Activated B cell treated with CpG ODN at 0.5 μM for 24 hours (primary cell): ENCODE measurements at regions of chr1 and their contacts with region 1.

Region 1: GRCh38 chr1:183674339-183674738 is 21.2 kb upstream of the APOBEC4 start:
- DNase-seq: no peak
- ATAC-seq: no peak
- H3K4me3 Mint-ChIP-seq: no peak overlapping the region
- H3K27ac Mint-ChIP-seq: no peak overlapping the region
- H3K4me1 Mint-ChIP-seq: no peaks in the 10 kb centered on the region
- H3K27me3 Mint-ChIP-seq: peaks cover 25% of the 10 kb centered on the region
- CTCF ChIP-seq: no peak

Region 2: GRCh38 chr1:183416850-183417771 is 257.2 kb before region 1 on chr1:
- CTCF ChIA-PET with region 1: no interaction called
- POLR2A ChIA-PET with region 1: no interaction called
- intact Hi-C with region 1: no loop called
- DNase-seq: no peak
- ATAC-seq: no peak
- H3K4me3 Mint-ChIP-seq: peak overlapping the region; percentile 44
- H3K27ac Mint-ChIP-seq: no peak overlapping the region
- H3K4me1 Mint-ChIP-seq: peaks cover 27% of the 10 kb centered on the region
- H3K27me3 Mint-ChIP-seq: peaks cover 49% of the 10 kb centered on the region
- CTCF ChIP-seq: no peak

Region 3: DNA sequence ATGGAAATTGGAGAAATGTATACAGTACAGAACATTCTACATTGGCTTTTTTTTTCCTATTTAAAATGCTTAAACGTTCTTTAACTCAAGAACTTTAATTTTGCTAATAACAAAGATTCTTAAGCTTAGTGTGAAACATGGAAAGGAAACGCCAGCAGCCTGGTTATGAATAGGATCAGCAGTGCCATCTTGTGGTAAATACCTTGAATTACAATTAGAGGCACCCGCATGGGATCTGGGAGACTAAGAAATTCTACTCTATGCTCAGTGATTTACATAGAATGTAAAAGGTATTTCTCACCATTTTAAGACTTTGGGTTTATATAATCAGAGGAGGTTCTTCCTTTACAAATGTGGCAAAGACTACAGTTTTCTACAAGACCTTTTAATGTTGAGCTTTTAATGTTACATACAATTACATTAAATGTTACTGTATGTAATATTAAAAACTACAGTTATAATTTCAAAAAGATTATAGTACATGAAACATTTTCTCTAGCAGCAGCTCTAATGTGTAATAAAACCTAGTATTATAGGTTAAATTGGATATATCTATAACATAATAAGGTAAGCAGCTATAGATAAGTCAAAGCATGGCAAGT is 10.9 kb after region 1 on chr1:
- CTCF ChIA-PET with region 1: interaction called, 12 read pairs
- POLR2A ChIA-PET with region 1: no interaction called
- intact Hi-C with region 1: no loop called
- DNase-seq: no peak
- ATAC-seq: peak; percentile 61
- H3K4me3 Mint-ChIP-seq: no peak overlapping the region
- H3K27ac Mint-ChIP-seq: no peak overlapping the region
- H3K4me1 Mint-ChIP-seq: peaks cover 8% of the 10 kb centered on the region
- H3K27me3 Mint-ChIP-seq: peaks cover 25% of the 10 kb centered on the region
- CTCF ChIP-seq: no peak

Region 4: DNA sequence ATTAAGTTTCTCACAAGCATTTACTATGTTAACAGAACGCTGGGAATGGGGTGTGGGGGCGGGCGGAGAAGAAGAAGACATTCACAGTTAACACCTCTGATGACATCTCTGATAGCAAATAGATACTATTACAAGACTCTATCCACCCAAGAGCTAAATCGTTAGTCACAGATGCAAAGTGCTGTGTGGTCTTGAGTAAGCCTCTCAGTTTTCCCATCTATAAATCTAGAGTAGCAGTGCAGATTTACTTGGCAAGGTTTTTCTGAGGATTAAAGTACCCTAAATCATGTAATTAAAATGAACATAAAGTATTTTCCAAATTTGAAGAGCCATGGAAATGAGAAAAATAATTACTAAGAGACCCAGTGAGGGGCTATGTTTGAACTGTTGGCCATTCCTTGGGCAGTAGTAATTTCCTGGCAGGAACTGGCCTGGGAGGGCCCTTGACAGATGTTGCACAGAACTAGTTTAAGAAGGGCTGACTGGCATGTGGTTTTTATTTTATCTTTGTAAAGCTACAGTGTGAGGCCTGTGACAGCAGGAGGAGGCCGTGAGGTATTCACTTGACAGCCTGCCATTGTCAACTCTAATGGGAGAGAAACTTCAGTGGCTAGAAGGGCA is 37.5 kb after region 1 on chr1:
- CTCF ChIA-PET with region 1: no interaction called
- POLR2A ChIA-PET with region 1: no interaction called
- intact Hi-C with region 1: no loop called
- DNase-seq: no peak
- ATAC-seq: no peak
- H3K4me3 Mint-ChIP-seq: no peak overlapping the region
- H3K27ac Mint-ChIP-seq: no peak overlapping the region
- H3K4me1 Mint-ChIP-seq: no peaks in the 10 kb centered on the region
- H3K27me3 Mint-ChIP-seq: no peaks in the 10 kb centered on the region
- CTCF ChIP-seq: no peak